GM23248 (cell line): ENCODE measurements at regions of chr14 and their contacts with region 1.

Region 1: GRCh38 chr14:89416002-89416995 is 734 bp downstream of the FOXN3 start:
- DNase-seq: peak; percentile 93
- H3K4me3 ChIP-seq: peak overlapping the region; percentile 92
- H3K27ac ChIP-seq: peak overlapping the region; percentile 95
- H3K4me1 ChIP-seq: peaks cover 15% of the 10 kb centered on the region
- H3K27me3 ChIP-seq: no peaks in the 10 kb centered on the region

Region 2: DNA sequence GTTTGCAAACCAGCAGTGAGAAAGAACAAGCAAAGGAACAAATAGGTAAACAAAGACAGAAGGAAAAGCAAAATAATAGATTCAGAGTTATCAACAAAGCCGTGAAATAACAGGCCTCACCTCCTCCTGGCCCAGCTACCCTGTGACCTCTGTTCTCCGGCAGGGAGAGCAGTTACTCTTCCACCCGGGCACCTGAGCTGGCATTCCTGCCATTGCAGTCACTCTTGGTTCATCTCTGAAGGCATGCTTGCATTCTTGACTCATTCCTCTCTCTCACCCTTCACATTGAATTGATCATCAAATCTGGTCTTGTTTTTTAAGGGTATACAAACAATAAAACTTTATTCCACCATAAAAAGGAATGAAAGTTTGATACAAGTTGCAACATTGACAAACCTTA is 496.8 kb before region 1 on chr14:
- in situ Hi-C with region 1: no loop called
- DNase-seq: peak; percentile 29
- H3K4me3 ChIP-seq: no peak overlapping the region
- H3K27ac ChIP-seq: no peak overlapping the region
- H3K4me1 ChIP-seq: no peaks in the 10 kb centered on the region
- H3K27me3 ChIP-seq: peaks cover 5% of the 10 kb centered on the region; the same call in 1 of the 2 replicates

Region 3: DNA sequence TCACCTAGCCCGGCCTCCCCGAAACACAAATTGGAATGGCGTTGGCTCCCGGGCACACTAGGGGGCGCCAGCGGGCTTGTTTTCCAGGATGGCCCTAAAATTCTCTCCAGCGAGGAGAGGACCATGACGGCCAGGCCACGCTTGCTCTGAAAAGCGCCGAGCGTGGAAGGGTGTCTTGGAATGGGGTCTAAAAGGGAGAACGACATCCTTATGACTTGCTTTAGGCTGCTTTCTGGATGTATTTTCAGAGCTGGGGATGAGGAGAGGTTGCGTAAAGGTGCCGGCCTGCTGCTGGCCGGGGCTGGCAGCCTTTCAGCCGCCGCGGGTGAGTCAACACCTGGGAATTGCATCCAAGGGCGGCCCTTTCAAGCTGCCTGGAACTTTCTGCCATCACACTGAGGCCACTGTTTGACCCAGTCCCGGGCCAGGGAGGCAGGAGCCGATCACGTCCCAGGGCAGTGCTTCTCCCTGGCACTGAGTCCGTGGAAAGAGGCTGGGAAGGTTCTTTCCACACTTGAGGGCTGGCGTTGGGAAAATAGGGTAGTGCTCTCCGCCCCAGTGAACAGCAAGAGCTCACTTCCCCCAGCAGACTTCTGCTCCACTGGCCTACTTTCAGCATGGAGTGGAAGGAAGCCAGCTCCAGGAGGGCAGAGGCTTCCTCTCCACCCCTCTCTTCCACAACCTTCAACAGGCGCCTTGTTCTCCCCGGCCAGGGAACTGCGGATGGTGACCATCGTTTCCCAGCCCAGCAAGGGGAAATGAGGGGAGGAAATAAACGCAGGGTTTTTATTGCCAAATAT is 375.6 kb before region 1 on chr14:
- in situ Hi-C with region 1: loop called (anchors 25 kb)
- DNase-seq: peak; percentile 92
- H3K4me3 ChIP-seq: peak overlapping the region; percentile 71
- H3K27ac ChIP-seq: peak overlapping the region; percentile 87
- H3K4me1 ChIP-seq: peaks cover 8% of the 10 kb centered on the region; the same call in 1 of the 2 replicates
- H3K27me3 ChIP-seq: no peaks in the 10 kb centered on the region